ENCODE measurements at regions of chr6 and their contacts with region 1.

Region 1: DNA sequence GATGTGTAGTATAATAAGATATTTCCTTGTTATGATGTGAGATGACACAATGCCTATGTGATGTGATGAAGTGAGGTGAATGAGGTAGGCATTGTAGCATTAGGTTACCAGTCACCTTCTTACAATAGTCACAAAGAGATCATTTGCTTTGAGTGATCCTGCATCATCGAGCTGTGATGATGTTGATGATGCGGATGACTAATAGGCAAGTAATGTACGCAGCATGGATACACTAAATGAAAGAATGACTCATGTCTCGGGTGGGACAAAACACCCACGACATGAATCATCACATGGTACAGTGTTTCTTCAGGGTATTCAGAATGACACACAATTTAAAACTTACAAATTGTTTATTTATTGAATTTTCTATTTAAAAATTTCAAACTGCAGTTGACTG is 806.3 kb upstream of the GJE1 start:
- DNase-seq: peak; percentile 99
- H3K4me3 ChIP-seq: peak overlapping the region in 2 of 3 experiments; percentile 6 to 18
- H3K27ac ChIP-seq: peak overlapping the region; percentile 99
- H3K4me1 ChIP-seq: peaks cover 5% of the 10 kb centered on the region
- H3K27me3 ChIP-seq: no peaks in the 10 kb centered on the region
- CTCF ChIP-seq: no peak

Region 2: DNA sequence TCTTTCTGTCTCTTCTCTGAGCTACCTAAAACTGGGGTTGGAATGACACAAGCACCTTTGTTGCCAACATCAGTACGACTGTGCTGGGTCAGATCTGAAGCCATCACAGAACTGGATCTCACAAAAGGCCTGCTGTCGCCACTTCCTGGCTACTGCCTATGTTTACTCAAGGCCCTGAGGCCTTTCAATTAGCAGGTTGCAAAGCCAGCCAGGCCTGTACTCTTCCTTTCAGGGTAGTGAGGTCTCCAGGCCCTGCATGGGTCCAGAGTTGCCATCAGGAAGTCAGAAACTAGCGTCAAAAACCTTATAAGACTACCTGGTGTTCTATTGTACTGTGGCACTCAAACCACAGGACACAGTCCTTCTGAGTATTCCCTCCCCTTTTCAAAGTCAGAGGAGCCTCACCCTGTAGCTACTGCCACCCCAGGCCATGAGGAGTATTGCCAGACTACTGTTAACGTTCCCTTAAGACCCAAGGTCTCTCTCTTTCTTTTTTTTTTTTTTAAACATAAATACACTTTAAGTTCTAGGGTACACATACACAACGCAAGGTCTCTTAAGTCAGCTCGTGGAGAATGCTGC is 131.1 kb before region 1 on chr6:
- CTCF ChIA-PET with region 1: no interaction called
- dilution Hi-C with region 1: no loop called
- in situ Hi-C with region 1: no loop called
- intact Hi-C with region 1: no loop called
- DNase-seq: no peak
- H3K4me3 ChIP-seq: no peak overlapping the region
- H3K27ac ChIP-seq: no peak overlapping the region
- H3K4me1 ChIP-seq: no peaks in the 10 kb centered on the region
- H3K27me3 ChIP-seq: no peaks in the 10 kb centered on the region
- CTCF ChIP-seq: no peak

Region 3: DNA sequence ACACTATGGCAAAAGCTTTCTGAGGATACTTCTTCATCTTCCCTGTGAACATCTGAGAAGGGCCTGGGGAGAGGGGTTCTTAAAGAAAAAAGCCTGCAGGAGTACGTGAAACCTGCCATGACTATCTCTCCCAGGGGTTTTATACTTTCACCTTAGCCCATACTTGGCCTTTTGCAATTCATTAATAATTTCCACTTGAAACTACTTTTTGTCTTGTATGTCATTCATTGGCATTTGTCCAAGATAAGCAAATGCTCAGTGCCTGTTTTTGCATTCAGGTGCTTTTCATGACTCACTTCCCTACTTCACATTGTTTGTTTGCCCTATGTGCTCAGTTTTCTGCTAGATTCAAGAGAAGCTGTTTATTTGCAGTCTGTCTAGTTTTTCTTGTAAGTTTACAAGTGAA is 226.1 kb after region 1 on chr6:
- CTCF ChIA-PET with region 1: no interaction called
- dilution Hi-C with region 1: no loop called
- in situ Hi-C with region 1: loop called in 1 of 2 experiments (anchors 25 kb)
- intact Hi-C with region 1: loop called (anchors 2 kb)
- DNase-seq: peak; percentile 94
- H3K4me3 ChIP-seq: no peak overlapping the region
- H3K27ac ChIP-seq: peak overlapping the region; percentile 48
- H3K4me1 ChIP-seq: peaks cover 6% of the 10 kb centered on the region
- H3K27me3 ChIP-seq: no peaks in the 10 kb centered on the region
- CTCF ChIP-seq: no peak